ENCODE measurements at regions of chr12 and their contacts with region 1.

Region 1: DNA sequence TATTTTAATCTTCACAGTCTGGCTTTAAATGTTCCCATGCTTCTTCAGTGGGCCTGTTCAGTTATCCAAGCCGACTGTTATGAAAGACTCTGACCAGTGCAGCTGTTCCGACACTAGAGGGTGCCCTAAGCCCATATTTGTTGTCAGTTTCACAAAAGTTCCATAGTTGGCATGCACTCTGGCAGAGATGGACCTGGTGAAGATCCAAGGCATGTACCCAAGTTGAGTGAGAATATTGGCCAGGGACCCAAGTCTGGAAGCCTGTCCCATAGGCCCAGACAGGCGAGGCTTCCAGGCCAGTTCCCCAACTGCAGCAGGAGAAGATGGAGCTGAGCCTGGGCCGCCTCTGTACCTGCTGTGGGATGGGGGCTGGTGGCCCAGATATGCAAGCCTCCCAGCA is 27.4 kb upstream of the GUCY2C start:
- DNase-seq: peak; percentile 37
- ATAC-seq: peak; percentile 88
- H3K4me3 ChIP-seq: no peak overlapping the region
- H3K27ac ChIP-seq: no peak overlapping the region
- H3K4me1 ChIP-seq: no peaks in the 10 kb centered on the region
- H3K27me3 ChIP-seq: no peaks in the 10 kb centered on the region
- CTCF ChIP-seq: peak; percentile 72 to 79 (median 74)
- EP300 ChIP-seq: no peak
- POLR2A ChIP-seq: no peak
- RAD21 ChIP-seq: peak; percentile 79

Region 2: DNA sequence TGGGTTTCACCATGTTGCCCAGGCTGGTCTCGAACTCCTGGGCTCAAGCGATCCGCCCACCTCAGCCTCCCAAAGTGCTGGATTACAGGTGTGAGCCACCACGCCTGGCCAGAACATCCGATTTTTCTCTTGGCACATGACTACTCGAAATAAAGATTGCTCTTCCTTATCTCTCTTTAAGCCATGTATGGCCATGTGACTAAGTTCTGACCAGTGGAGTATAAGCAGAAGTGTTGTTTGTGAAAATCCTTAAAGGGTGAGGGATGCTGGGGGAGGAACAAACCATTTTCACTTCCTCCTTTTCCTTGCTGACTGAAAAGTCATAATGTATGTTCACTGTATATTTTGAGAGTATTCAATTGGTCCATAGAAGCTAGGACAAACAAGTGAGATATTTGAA is 409.0 kb before region 1 on chr12:
- CTCF ChIA-PET with region 1: no interaction called
- POLR2A ChIA-PET with region 1: no interaction called
- RAD21 ChIA-PET with region 1: no interaction called
- SMC1A ChIA-PET with region 1: no interaction called
- in situ Hi-C with region 1: no loop called
- intact Hi-C with region 1: no loop called
- DNase-seq: peak; percentile 23
- ATAC-seq: peak; percentile 69
- H3K4me3 ChIP-seq: no peak overlapping the region
- H3K27ac ChIP-seq: no peak overlapping the region
- H3K4me1 ChIP-seq: no peaks in the 10 kb centered on the region
- H3K27me3 ChIP-seq: no peaks in the 10 kb centered on the region
- CTCF ChIP-seq: no peak
- EP300 ChIP-seq: no peak
- POLR2A ChIP-seq: no peak
- RAD21 ChIP-seq: no peak

Region 3: DNA sequence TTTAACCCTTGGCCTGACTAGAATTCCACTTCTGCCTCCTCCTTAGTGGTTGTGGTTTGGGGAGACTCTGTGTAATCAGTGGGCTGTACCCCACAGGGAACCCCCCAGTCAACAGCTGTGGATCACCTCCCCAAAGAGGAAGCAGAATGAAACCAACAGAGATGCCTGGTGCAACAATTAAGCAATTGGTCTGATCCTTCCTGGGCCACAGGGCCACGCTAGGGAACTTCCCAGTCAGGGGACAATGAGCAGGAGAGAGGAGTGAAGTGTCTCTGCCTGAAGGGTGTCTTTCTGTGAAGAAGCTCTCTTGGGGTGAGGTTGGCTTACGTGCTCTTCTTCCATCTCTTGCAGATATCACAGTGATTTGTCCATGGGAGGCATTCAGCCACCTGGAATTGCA is 257.3 kb after region 1 on chr12:
- CTCF ChIA-PET with region 1: no interaction called
- POLR2A ChIA-PET with region 1: no interaction called
- RAD21 ChIA-PET with region 1: no interaction called
- SMC1A ChIA-PET with region 1: no interaction called
- in situ Hi-C with region 1: no loop called
- intact Hi-C with region 1: no loop called
- DNase-seq: no peak
- ATAC-seq: peak; percentile 81
- H3K4me3 ChIP-seq: no peak overlapping the region
- H3K27ac ChIP-seq: no peak overlapping the region
- H3K4me1 ChIP-seq: peaks cover 11% of the 10 kb centered on the region
- H3K27me3 ChIP-seq: no peaks in the 10 kb centered on the region
- CTCF ChIP-seq: no peak
- EP300 ChIP-seq: no peak
- POLR2A ChIP-seq: no peak
- RAD21 ChIP-seq: no peak

Region 4: DNA sequence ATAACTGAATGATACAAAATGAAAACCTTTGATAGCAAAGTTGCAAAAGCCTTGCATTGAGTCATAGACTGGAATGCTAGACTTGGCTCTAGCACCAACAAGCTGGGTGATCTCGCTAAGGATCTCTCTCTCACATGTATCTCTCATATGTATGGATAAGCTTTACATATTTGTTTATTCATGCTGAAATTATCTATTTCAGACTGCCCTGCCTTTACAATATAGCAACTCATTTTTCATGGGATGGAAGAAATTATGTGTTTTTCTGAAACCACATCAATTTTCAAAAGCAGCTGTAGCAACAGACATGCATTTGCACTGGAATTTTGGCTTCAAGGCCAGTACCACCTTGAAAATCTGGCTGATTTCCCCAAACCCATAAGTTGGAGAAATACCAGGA is 486.0 kb after region 1 on chr12:
- CTCF ChIA-PET with region 1: no interaction called
- POLR2A ChIA-PET with region 1: no interaction called
- RAD21 ChIA-PET with region 1: no interaction called
- SMC1A ChIA-PET with region 1: no interaction called
- in situ Hi-C with region 1: loop called (anchors 10 kb)
- intact Hi-C with region 1: no loop called
- DNase-seq: no peak
- ATAC-seq: no peak
- H3K4me3 ChIP-seq: no peak overlapping the region
- H3K27ac ChIP-seq: no peak overlapping the region
- H3K4me1 ChIP-seq: no peaks in the 10 kb centered on the region
- H3K27me3 ChIP-seq: no peaks in the 10 kb centered on the region
- CTCF ChIP-seq: no peak
- EP300 ChIP-seq: no peak
- POLR2A ChIP-seq: no peak
- RAD21 ChIP-seq: no peak

Region 5: DNA sequence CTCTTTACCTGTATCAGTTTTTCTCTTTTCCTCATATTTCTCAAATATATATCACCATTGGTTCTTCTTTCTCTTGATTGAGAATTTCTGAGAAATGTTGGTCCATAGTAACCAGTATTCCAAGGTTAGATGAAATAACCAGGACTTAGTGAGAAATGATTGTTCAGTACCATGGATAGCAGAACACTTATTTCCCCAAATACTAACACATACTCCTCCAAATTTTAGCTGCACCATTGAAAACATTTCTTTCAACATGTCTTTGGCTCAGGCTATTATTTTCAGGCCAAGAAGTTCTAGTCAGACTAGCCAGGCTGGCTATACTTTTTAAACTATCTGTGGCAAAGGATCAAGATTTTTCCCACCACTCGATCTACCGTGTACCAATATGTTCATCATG is 711.8 kb after region 1 on chr12:
- CTCF ChIA-PET with region 1: no interaction called
- POLR2A ChIA-PET with region 1: no interaction called
- RAD21 ChIA-PET with region 1: no interaction called
- SMC1A ChIA-PET with region 1: no interaction called
- in situ Hi-C with region 1: no loop called
- intact Hi-C with region 1: no loop called
- DNase-seq: no peak
- ATAC-seq: no peak
- H3K4me3 ChIP-seq: no peak overlapping the region
- H3K27ac ChIP-seq: no peak overlapping the region
- H3K4me1 ChIP-seq: no peaks in the 10 kb centered on the region
- H3K27me3 ChIP-seq: no peaks in the 10 kb centered on the region
- CTCF ChIP-seq: no peak
- EP300 ChIP-seq: no peak
- POLR2A ChIP-seq: no peak
- RAD21 ChIP-seq: no peak